ENCODE measurements at regions of chr12 and their contacts with region 1.

Region 1: GRCh38 chr12:94101738-94102660 is 46.4 kb upstream of the PLXNC1 start:
- DNase-seq: peak; percentile 81
- CTCF ChIP-seq: peak; percentile 95

Region 2: GRCh38 chr12:93419388-93420034 is 682.5 kb before region 1 on chr12:
- CTCF ChIA-PET with region 1: interaction called, 18 read pairs
- POLR2A ChIA-PET with region 1: no interaction called
- DNase-seq: peak; percentile 27
- CTCF ChIP-seq: peak; percentile 53

Region 3: GRCh38 chr12:93494096-93494495 is 607.9 kb before region 1 on chr12:
- CTCF ChIA-PET with region 1: interaction called, 10 read pairs
- POLR2A ChIA-PET with region 1: no interaction called
- DNase-seq: no peak
- CTCF ChIP-seq: no peak

Region 4: GRCh38 chr12:93514853-93515252 is 587.1 kb before region 1 on chr12:
- CTCF ChIA-PET with region 1: interaction called, 19 read pairs
- POLR2A ChIA-PET with region 1: no interaction called
- DNase-seq: no peak
- CTCF ChIP-seq: no peak

Region 5: GRCh38 chr12:93536766-93537488 is 565.1 kb before region 1 on chr12:
- CTCF ChIA-PET with region 1: interaction called, 13 read pairs
- POLR2A ChIA-PET with region 1: no interaction called
- DNase-seq: peak; percentile 17
- CTCF ChIP-seq: no peak

Region 6: GRCh38 chr12:93591137-93591868 is 510.7 kb before region 1 on chr12:
- CTCF ChIA-PET with region 1: interaction called, 10 read pairs
- POLR2A ChIA-PET with region 1: no interaction called
- DNase-seq: peak; percentile 59
- CTCF ChIP-seq: no peak

Region 7: GRCh38 chr12:94074980-94075928 is 26.7 kb before region 1 on chr12:
- CTCF ChIA-PET with region 1: interaction called, 54 read pairs
- POLR2A ChIA-PET with region 1: no interaction called
- DNase-seq: peak; percentile 26
- CTCF ChIP-seq: peak; percentile 37

Measured in GM10248 (cell line).